Dorsolateral prefrontal cortex (tissue), 120 donors: ENCODE measurements at regions of chr5 and their contacts with region 1.

Region 1: GRCh38 chr5:140966293-140967225 is at the start of gene PCDHAC2:
- DNase-seq: peak; percentile 42 to 80 (median 69)
- H3K4me3 ChIP-seq: peak within 1 kb of the TSS; percentile 57 to 90 (median 76)
- H3K27ac ChIP-seq: peak within 1 kb of the TSS; percentile 46 to 97 (median 91)
- H3K27me3 ChIP-seq: no peaks in the 10 kb centered on the region
- CTCF ChIP-seq: peak in 7 of 56 donors; percentile 1 to 17 (median 5)
- total RNA-seq, gene PCDHAC2: 11.9 to 40.6 (median 25.2) TPM

Region 2: GRCh38 chr5:140926443-140927227 is 39.9 kb before region 1 on chr5:
- intact Hi-C with region 1: loop called (anchors 2 to 5 kb)
- DNase-seq: peak; percentile 72 to 88 (median 79)
- H3K4me3 ChIP-seq: peak overlapping the region; percentile 39 to 82 (median 66)
- H3K27ac ChIP-seq: peak overlapping the region in 31 of 59 donors; percentile 1 to 70 (median 44)
- H3K27me3 ChIP-seq: peaks cover 0 to 4% (median 0%) of the 10 kb centered on the region in 45 donors
- CTCF ChIP-seq: peak; percentile 40 to 94 (median 85)